GM12878 (cell line): ENCODE measurements at regions of chr20 and their contacts with region 1.

Region 1: DNA sequence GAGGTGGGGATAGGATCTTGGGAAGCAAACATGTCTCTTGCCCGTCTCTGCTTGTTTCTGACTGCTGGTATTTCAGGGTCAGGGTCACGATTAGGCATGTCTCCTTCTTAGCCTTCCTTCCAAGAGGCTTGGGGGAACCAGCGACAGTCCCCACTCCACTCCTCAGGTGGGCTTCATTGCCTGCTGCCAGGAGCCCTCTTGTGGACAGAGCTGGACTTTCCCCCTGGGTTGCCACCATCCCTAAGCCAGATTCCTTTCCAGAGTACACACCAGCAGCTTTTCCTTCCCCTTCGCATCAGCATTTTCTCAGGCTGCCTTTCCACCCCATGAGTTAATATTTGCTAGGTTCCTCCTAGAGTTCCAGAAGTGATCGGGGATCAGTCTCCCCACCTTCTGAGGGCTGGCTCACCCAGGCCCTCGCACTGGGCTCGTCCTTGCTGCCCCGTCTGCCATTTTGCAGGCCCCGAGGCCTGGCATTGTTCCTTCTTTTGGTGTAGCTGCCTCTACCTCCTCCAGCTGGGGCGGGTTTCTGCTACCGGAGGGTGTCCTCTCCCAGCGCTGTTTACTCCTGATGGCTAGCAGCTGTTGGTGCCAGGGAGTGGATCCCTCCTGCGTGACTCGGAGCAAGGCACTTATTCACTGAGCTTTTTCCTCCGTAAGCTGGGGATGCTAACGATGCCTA is 8.8 kb upstream of the C20orf144 start:
- DNase-seq: no peak
- ATAC-seq: peak; percentile 82
- H3K4me3 ChIP-seq: no peak overlapping the region
- H3K27ac ChIP-seq: 0 out of 2 replicates have a peak overlapping the region, but pooled peaks have one; percentile 11
- H3K4me1 ChIP-seq: peaks cover 23% of the 10 kb centered on the region
- H3K27me3 ChIP-seq: peaks cover 0 to 2% of the 10 kb centered on the region in 2 experiments; a peak in 2 of 4 replicates
- CTCF ChIP-seq: peak; percentile 82 to 88 (median 87)
- EP300 ChIP-seq: no peak
- POLR2A ChIP-seq: no peak
- RAD21 ChIP-seq: peak; percentile 93

Region 2: GRCh38 chr20:33450867-33451266 is 202.5 kb before region 1 on chr20:
- CTCF ChIA-PET with region 1: interaction called, 7 read pairs
- POLR2A ChIA-PET with region 1: no interaction called
- RAD21 ChIA-PET with region 1: interaction called, 5 read pairs
- SMC1A ChIA-PET with region 1: interaction called, 3 read pairs
- in situ Hi-C with region 1: loop called (anchors 5 kb)
- intact Hi-C with region 1: loop called (anchors 1 kb)
- DNase-seq: no peak
- ATAC-seq: no peak
- H3K4me3 ChIP-seq: no peak overlapping the region
- H3K27ac ChIP-seq: no peak overlapping the region
- H3K4me1 ChIP-seq: no peaks in the 10 kb centered on the region
- H3K27me3 ChIP-seq: no peaks in the 10 kb centered on the region
- CTCF ChIP-seq: no peak
- EP300 ChIP-seq: no peak
- POLR2A ChIP-seq: no peak
- RAD21 ChIP-seq: no peak

Region 3: DNA sequence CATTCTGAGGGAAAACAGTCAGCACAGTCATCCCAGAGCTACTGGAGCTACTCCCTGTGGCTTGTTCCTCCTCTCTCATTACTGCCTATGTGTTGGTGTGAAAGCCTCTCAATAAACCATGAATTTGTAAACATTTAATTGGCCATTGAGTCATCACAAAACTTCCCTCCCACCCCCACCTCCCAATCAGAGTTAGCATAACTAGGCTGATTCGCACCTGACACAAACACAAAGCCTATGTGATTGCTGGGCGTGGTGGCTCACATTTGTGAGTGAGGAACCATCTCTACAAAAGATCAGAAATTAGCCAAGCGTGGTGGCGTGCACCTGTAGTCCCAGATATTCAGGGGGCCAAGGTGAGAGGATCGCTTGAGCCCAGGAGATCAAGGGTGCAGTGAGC is 192.6 kb before region 1 on chr20:
- CTCF ChIA-PET with region 1: interaction called, 17 read pairs
- POLR2A ChIA-PET with region 1: no interaction called
- RAD21 ChIA-PET with region 1: interaction called, 3 read pairs
- SMC1A ChIA-PET with region 1: interaction called, 8 read pairs
- in situ Hi-C with region 1: no loop called
- intact Hi-C with region 1: loop called (anchors 1 kb)
- DNase-seq: no peak
- ATAC-seq: peak; percentile 38
- H3K4me3 ChIP-seq: no peak overlapping the region
- H3K27ac ChIP-seq: no peak overlapping the region
- H3K4me1 ChIP-seq: no peaks in the 10 kb centered on the region
- H3K27me3 ChIP-seq: no peaks in the 10 kb centered on the region
- CTCF ChIP-seq: no peak
- EP300 ChIP-seq: no peak
- POLR2A ChIP-seq: no peak
- RAD21 ChIP-seq: no peak

Region 4: GRCh38 chr20:33515569-33516216 is 137.7 kb before region 1 on chr20:
- CTCF ChIA-PET with region 1: interaction called, 9 read pairs
- POLR2A ChIA-PET with region 1: interaction called, 3 read pairs
- RAD21 ChIA-PET with region 1: interaction called, 3 read pairs
- SMC1A ChIA-PET with region 1: no interaction called
- in situ Hi-C with region 1: no loop called
- intact Hi-C with region 1: loop called (anchors 5 kb)
- DNase-seq: no peak
- ATAC-seq: no peak
- H3K4me3 ChIP-seq: no peak overlapping the region
- H3K27ac ChIP-seq: no peak overlapping the region
- H3K4me1 ChIP-seq: no peaks in the 10 kb centered on the region
- H3K27me3 ChIP-seq: no peaks in the 10 kb centered on the region
- CTCF ChIP-seq: peak in 1 of 3 experiments; percentile 8; a peak in 1 of 6 replicates
- EP300 ChIP-seq: no peak
- POLR2A ChIP-seq: no peak
- RAD21 ChIP-seq: no peak; the same call in 1 of the 2 replicates